ENCODE measurements at regions of chr6 and their contacts with region 1.

Region 1: GRCh38 chr6:73520688-73521350 is at the start of gene EEF1A1:
- DNase-seq: peak; percentile 98 to 100 (median 99)
- ATAC-seq: peak; percentile 81
- H3K4me3 ChIP-seq: peak within 1 kb of the TSS; percentile 90
- H3K4me3 Mint-ChIP-seq: peak within 1 kb of the TSS; percentile 94
- H3K27ac ChIP-seq: peak within 1 kb of the TSS; percentile 99
- H3K27ac Mint-ChIP-seq: peak within 1 kb of the TSS; percentile 97
- H3K4me1 ChIP-seq: peaks cover 64% of the 10 kb centered on the region
- H3K4me1 Mint-ChIP-seq: peaks cover 74% of the 10 kb centered on the region
- H3K27me3 ChIP-seq: no peaks in the 10 kb centered on the region
- H3K27me3 Mint-ChIP-seq: no peaks in the 10 kb centered on the region
- CTCF ChIP-seq: no peak
- total RNA-seq, gene EEF1A1: 15,669 to 16,465 TPM

Region 2: GRCh38 chr6:73451223-73452107 is 69.4 kb before region 1 on chr6:
- CTCF ChIA-PET with region 1: no interaction called
- POLR2A ChIA-PET with region 1: interaction called, 17 read pairs
- intact Hi-C with region 1: no loop called
- DNase-seq: peak; percentile 9 to 74 (median 31)
- ATAC-seq: peak; percentile 53
- H3K4me3 ChIP-seq: peak overlapping the region; percentile 87
- H3K4me3 Mint-ChIP-seq: peak overlapping the region; percentile 92
- H3K27ac ChIP-seq: peak overlapping the region; percentile 69 to 85
- H3K27ac Mint-ChIP-seq: peak overlapping the region; percentile 86
- H3K4me1 ChIP-seq: peaks cover 54% of the 10 kb centered on the region
- H3K4me1 Mint-ChIP-seq: peaks cover 32% of the 10 kb centered on the region
- H3K27me3 ChIP-seq: no peaks in the 10 kb centered on the region
- H3K27me3 Mint-ChIP-seq: no peaks in the 10 kb centered on the region
- CTCF ChIP-seq: no peak

Region 3: DNA sequence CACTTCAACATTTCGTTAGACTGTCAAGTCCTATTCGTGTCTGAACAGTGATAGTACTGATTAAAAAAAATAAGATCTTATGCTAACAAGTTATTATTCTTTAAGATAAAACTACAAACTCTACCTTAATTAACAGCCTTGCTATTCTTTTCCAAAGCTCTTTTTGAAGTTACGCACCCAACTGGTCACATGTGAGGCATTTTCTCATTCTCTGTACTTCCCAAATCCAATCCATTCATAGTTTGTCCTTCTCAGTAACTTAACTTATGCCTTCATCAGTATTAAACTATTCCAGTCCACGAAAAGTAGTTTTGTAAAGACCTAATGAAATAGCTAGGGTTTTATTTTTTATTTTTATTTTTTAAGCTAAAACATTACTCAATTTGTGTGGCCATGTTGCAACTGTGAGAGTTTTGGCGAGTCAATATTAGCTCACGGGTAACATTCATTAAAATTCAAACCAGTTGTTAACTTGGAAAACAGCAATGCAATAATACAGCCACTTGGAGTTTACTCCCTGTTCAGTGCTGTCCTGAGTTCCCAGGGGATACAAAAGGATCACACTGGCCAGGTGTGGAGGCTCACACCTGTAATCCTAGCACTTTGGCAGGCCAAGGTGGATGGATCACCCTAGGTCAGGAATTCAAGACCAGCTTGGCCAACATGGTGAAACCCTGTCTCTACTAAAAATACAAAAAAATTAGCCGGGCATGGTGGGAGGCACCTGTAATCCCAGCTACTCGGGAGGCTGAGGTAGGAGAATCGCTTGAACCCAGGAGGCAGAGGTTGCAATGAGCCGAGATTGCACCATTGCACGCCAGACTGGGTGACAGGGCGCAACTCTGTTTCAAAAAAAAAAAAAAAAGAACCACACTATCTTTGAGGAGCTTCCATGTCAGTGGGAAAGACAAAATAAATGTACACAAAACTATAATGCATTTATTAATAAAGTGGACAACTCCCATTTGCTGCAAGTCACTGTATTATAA is 27.9 kb after region 1 on chr6:
- CTCF ChIA-PET with region 1: no interaction called
- POLR2A ChIA-PET with region 1: interaction called, 10 read pairs
- intact Hi-C with region 1: no loop called
- DNase-seq: no peak
- ATAC-seq: no peak
- H3K4me3 ChIP-seq: no peak overlapping the region
- H3K4me3 Mint-ChIP-seq: no peak overlapping the region
- H3K27ac ChIP-seq: no peak overlapping the region
- H3K27ac Mint-ChIP-seq: no peak overlapping the region
- H3K4me1 ChIP-seq: no peaks in the 10 kb centered on the region
- H3K4me1 Mint-ChIP-seq: no peaks in the 10 kb centered on the region
- H3K27me3 ChIP-seq: no peaks in the 10 kb centered on the region
- H3K27me3 Mint-ChIP-seq: no peaks in the 10 kb centered on the region
- CTCF ChIP-seq: no peak

Region 4: DNA sequence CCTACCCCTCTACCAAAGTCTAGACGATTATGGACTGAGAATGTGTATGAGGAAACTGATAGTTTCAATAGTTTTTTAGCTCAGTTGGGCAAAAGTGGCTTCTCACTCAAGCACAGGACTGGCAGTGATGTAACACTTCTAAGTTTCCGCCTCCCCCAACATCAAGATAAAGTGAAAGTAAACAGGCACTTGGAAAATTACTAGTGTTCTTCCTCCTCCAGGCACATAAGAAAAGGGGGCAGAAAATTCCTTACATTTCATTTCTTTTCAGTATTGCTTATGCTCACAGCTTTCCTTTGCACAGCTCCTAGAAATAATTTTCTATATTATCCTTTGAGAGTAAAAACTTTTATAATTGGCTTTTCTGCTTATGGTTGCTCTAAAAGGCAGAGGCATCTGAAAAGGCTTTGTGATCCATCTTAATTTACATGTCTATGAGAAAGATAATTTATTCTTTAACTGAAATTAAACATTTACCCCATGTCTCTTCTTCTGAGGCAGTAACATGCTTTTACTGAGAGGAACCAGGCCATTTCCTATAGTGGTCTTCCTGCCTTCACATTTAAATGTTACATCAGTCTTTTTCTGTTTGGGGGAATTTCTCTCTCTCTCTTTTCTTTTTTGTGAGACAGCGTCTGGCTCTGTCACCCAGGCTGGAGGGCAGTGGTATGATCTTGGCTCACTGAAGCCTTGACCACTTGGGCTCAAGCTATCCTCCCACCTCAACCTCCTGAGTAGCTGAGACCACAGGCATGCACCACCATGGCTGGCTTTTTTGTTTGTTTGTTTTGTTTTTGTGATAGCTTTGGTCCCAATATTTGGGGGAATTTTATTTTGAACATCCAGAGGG is 65.0 kb after region 1 on chr6:
- CTCF ChIA-PET with region 1: interaction called, 10 read pairs
- POLR2A ChIA-PET with region 1: interaction called, 137 read pairs
- intact Hi-C with region 1: loop called (anchors 2 to 5 kb)
- DNase-seq: peak in 8 of 14 experiments; percentile 6 to 87 (median 36)
- ATAC-seq: peak; percentile 86
- H3K4me3 ChIP-seq: peak overlapping the region; percentile 48
- H3K4me3 Mint-ChIP-seq: peak overlapping the region; percentile 75
- H3K27ac ChIP-seq: peak overlapping the region; percentile 89 to 93
- H3K27ac Mint-ChIP-seq: peak overlapping the region; percentile 98
- H3K4me1 ChIP-seq: peaks cover 15% of the 10 kb centered on the region
- H3K4me1 Mint-ChIP-seq: peaks cover 20% of the 10 kb centered on the region
- H3K27me3 ChIP-seq: no peaks in the 10 kb centered on the region
- H3K27me3 Mint-ChIP-seq: no peaks in the 10 kb centered on the region
- CTCF ChIP-seq: no peak

Region 5: DNA sequence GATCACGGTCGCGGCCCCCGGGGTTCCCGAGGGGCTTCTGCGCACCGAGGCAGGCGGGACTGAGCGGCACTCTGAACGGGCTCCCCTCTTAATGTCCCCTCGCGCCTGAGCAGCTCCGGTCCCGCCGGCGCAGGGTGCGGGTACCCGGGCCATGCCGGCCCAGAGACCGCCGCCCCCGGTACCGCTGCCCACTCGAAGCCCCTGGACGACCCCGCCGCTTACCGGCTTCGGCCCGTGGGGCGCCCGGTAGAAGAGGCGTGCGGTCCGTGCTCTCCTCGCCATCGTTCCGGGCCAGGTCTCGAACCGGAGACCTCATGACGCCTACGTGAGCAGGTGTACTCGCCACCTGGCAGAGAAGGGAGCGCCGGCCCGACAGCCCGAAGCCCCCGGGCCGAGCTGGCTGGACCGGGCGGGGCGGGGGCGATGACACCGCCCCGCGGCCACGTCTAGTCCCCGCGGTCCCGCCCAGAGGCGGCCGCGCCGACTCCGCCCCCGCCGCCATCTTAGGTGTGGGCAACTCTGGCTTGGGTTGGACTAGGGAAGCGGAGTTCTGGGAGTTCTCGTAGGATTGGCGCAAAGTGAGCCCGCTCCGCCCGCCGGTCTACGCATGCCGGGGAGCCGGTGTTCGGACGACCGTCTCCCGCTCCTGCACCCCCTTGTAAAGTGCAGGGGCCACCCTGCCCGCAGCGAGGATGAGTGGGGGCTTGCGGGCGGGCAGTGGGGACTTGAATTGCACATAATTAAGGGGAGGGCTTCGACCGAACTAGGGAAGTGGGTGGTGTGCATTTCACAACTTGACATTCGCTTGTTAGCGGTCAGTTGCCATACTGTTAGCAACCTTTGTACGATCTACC is 133.0 kb after region 1 on chr6 and contains the start of gene SLC17A5:
- CTCF ChIA-PET with region 1: interaction called, 12 read pairs
- POLR2A ChIA-PET with region 1: interaction called, 140 read pairs
- intact Hi-C with region 1: loop called in 1 of 2 experiments (anchors 2 kb)
- DNase-seq: peak; percentile 71 to 95 (median 87)
- ATAC-seq: peak; percentile 85
- H3K4me3 ChIP-seq: peak within 1 kb of the TSS; percentile 94
- H3K4me3 Mint-ChIP-seq: peak within 1 kb of the TSS; percentile 99
- H3K27ac ChIP-seq: peak within 1 kb of the TSS; percentile 93 to 99
- H3K27ac Mint-ChIP-seq: peak within 1 kb of the TSS; percentile 95
- H3K4me1 ChIP-seq: peaks cover 15% of the 10 kb centered on the region
- H3K4me1 Mint-ChIP-seq: peaks cover 42% of the 10 kb centered on the region
- H3K27me3 ChIP-seq: no peaks in the 10 kb centered on the region
- H3K27me3 Mint-ChIP-seq: no peaks in the 10 kb centered on the region
- CTCF ChIP-seq: no peak
- total RNA-seq, gene SLC17A5: 5.3 to 6.2 TPM

Region 6: GRCh38 chr6:75243333-75244062 is 1722.7 kb after region 1 on chr6 and contains the start of gene COX7A2:
- CTCF ChIA-PET with region 1: no interaction called
- POLR2A ChIA-PET with region 1: interaction called, 14 read pairs
- intact Hi-C with region 1: no loop called
- DNase-seq: peak; percentile 73 to 96 (median 78)
- ATAC-seq: peak; percentile 95
- H3K4me3 ChIP-seq: peak within 1 kb of the TSS; percentile 88
- H3K4me3 Mint-ChIP-seq: peak within 1 kb of the TSS; percentile 99
- H3K27ac ChIP-seq: peak within 1 kb of the TSS; percentile 87 to 97
- H3K27ac Mint-ChIP-seq: peak within 1 kb of the TSS; percentile 95
- H3K4me1 ChIP-seq: peaks cover 24% of the 10 kb centered on the region
- H3K4me1 Mint-ChIP-seq: peaks cover 40% of the 10 kb centered on the region
- H3K27me3 ChIP-seq: no peaks in the 10 kb centered on the region
- H3K27me3 Mint-ChIP-seq: peaks cover 17% of the 10 kb centered on the region
- CTCF ChIP-seq: no peak
- total RNA-seq, gene COX7A2: 189 to 195 TPM

Measured in CD4-positive, alpha-beta T cell (primary cell).